Right cardiac atrium (tissue), 5 donors: ENCODE measurements at regions of chr5 and their contacts with region 1.

Region 1: DNA sequence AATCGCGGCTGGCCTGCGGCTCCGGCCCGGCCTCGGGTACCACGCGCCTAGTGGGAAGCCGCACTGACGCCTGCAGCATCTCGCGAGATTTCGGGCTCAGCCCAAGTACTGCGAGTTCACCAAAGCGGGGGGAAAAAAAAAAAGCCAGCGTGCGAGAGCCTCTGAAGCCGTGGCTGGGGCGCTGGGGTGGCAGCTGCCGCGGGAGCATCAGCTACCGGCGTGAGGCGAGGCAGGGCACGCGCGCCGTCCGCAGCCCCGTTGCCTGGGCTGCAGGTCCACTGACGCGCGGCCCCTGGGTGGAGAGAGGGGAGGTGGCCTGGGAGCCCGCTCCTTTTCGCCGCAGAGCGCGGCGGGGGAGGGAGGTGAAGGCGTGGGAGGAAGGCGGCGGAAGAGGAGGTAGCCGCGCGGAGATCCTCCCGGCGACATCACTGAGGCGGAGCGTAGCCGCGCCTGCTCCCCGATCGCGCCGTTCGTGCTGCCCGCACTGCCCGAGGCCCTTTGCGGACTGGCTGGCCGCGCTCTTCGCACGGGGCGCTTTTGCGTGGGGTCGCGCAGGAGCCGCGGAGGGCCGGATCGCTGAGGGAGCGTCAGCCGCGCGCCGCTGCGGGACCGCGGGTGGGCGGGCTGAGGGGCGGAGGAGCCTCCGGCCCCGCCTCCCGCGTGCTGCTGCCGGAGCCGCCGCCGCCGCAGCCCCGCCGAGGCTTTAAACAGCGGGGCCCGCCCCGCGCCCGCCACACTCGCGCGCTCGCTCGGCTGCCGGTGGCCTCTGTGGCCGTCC is at the start of gene SLC12A2:
- DNase-seq: peak; percentile 95 to 98 (median 97)
- ATAC-seq: peak; percentile 94
- H3K4me3 ChIP-seq: peak within 1 kb of the TSS; percentile 91
- H3K27ac ChIP-seq: peak within 1 kb of the TSS; percentile 93
- H3K4me1 ChIP-seq: no peaks in the 10 kb centered on the region
- H3K27me3 ChIP-seq: no peaks in the 10 kb centered on the region
- total RNA-seq, gene SLC12A2: 8.9 to 18.7 (median 10.5) TPM

Region 2: DNA sequence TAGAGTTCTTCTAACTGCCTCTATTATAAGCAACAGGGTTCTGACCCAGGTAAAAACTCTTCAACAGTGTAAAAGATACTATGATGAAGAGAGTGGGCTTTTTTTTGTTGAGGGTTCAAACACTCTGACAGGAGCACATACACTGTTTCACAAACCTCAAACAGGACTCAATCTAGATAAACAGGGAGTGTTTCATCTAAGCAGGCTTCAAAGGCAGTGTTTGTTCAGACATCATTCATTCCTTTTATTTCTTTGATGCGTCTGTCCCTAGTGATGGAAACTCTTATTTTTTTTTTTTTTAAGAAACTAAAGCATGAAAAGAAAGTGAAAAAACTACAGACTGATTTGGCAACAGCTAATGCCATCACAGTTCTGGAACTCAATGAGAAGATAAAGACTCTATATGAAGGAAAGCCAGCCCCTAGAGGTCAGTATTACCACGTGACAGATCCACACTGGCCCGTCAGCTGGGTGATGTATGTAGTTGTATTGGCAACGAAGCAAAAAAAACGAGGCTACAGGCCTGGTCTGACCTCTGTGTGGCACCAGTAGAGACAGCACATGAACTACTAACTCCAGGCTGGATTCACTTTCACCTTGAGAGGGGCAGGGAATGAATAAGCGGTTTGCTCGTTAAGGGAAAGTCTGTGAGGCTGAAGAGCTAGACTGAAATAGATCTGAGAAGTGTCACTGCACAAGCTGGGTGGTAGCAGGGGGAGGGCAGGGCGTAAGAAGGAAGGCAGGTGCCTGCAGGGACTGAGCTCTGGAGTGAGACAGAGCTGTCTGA is 207.8 kb before region 1 on chr5:
- intact Hi-C with region 1: loop called in 1 of 4 experiments (anchors 10 kb)
- DNase-seq: peak; percentile 34 to 58 (median 50)
- ATAC-seq: peak; percentile 86 to 92
- H3K4me3 ChIP-seq: no peak overlapping the region
- H3K27ac ChIP-seq: peak overlapping the region; percentile 19
- H3K4me1 ChIP-seq: peaks cover 3% of the 10 kb centered on the region
- H3K27me3 ChIP-seq: no peaks in the 10 kb centered on the region